Right cardiac atrium (tissue), 5 donors: ENCODE measurements at regions of chr16 and their contacts with region 1.

Region 1: GRCh38 chr16:76668207-76668725 is 391.1 kb downstream of the CNTNAP4 start:
- DNase-seq: no peak
- ATAC-seq: no peak
- H3K4me3 ChIP-seq: no peak overlapping the region
- H3K27ac ChIP-seq: no peak overlapping the region
- H3K4me1 ChIP-seq: no peaks in the 10 kb centered on the region
- H3K27me3 ChIP-seq: no peaks in the 10 kb centered on the region

Region 2: DNA sequence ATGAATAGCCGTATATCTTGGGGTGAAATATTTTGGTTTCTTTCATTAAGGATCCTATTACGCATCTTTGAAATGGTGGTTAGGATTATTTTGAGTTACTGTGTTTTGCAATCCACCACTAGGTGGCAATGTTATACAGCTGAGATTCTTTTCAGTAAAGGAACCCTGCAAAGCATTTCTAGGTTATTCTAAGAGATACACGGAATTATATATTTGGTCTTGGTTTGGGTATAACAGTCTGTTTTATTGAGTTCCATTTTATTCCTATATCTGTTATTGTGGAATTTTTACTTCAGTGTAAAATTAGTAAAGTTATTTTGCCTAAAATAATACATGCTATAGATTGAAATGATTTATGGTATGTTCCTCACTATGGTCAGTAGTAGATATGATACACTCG is 879.0 kb before region 1 on chr16:
- intact Hi-C with region 1: loop called in 1 of 4 experiments (anchors 10 kb)
- DNase-seq: no peak
- ATAC-seq: no peak
- H3K4me3 ChIP-seq: no peak overlapping the region
- H3K27ac ChIP-seq: no peak overlapping the region
- H3K4me1 ChIP-seq: no peaks in the 10 kb centered on the region
- H3K27me3 ChIP-seq: no peaks in the 10 kb centered on the region

Region 3: DNA sequence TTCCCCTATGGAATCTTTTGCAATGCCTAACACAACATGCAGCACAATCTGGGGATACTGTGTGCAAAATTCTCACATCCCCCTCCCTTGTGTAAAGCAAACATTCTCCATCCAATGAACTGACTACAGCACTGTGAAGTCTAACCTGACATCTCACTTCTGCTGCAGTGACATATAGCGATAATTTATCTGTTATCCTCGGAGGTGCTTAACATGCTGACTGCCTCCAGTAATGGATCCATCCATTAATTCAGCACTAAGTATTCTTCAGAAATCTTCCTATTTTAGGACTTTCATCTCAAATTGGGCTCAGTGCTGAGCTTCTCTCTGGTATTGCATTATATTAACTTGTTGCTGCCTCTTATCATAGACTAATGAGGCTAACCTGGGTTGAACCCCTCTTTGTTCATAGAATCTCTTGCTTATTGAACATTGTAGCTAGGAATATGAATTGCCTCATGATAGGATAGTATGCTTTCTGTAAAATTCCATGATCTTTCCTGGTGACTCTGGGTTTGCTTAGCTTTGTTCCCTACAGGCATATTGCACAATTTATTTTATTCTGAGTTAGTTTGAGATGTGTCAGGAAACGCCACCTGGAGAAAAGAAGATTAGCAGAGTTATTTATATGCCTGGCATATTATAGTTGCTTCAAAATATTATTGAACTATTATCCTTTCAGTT is 203.2 kb before region 1 on chr16:
- intact Hi-C with region 1: no loop called
- DNase-seq: no peak
- ATAC-seq: no peak
- H3K4me3 ChIP-seq: no peak overlapping the region
- H3K27ac ChIP-seq: no peak overlapping the region
- H3K4me1 ChIP-seq: no peaks in the 10 kb centered on the region
- H3K27me3 ChIP-seq: no peaks in the 10 kb centered on the region